MCF 10A (cell line): ENCODE measurements at regions of chrX and their contacts with region 1.

Region 1: GRCh38 chrX:138745196-138745595 is 33.7 kb upstream of the FGF13 start:
- DNase-seq: peak; percentile 66
- H3K4me3 Mint-ChIP-seq: no peak overlapping the region
- H3K27ac Mint-ChIP-seq: no peak overlapping the region
- H3K4me1 Mint-ChIP-seq: no peaks in the 10 kb centered on the region
- H3K27me3 Mint-ChIP-seq: peaks cover 19% of the 10 kb centered on the region
- CTCF ChIP-seq: peak; percentile 80

Region 2: GRCh38 chrX:138128027-138128671 is 617.0 kb before region 1 on chrX:
- CTCF ChIA-PET with region 1: interaction called, 12 read pairs
- POLR2A ChIA-PET with region 1: no interaction called
- intact Hi-C with region 1: loop called (anchors 1 kb)
- DNase-seq: peak; percentile 49
- H3K4me3 Mint-ChIP-seq: no peak overlapping the region
- H3K27ac Mint-ChIP-seq: no peak overlapping the region
- H3K4me1 Mint-ChIP-seq: peaks cover 5% of the 10 kb centered on the region
- H3K27me3 Mint-ChIP-seq: peaks cover 11% of the 10 kb centered on the region
- CTCF ChIP-seq: peak; percentile 54

Region 3: DNA sequence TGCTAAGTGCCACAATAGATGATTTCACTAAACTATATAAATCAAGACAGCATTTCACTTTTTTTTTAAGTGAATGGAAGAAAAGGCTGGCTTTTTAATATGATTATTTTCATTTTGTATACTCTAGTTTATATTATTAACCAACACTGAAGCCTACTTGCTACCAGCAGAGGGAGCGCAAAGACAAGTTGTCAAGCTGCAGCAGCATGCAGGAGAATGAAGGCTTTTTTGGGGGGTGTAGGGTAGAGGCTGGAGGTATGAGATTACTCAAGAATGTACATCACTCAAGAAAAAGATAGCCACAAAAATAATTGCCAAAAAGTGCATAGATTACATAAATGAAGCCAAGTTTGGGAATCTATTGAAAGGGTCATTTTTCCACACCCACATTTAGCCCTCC is 553.2 kb before region 1 on chrX:
- CTCF ChIA-PET with region 1: interaction called, 18 read pairs
- POLR2A ChIA-PET with region 1: interaction called, 3 read pairs
- intact Hi-C with region 1: loop called (anchors 1 kb)
- DNase-seq: peak; percentile 43
- H3K4me3 Mint-ChIP-seq: no peak overlapping the region
- H3K27ac Mint-ChIP-seq: no peak overlapping the region
- H3K4me1 Mint-ChIP-seq: no peaks in the 10 kb centered on the region
- H3K27me3 Mint-ChIP-seq: peaks cover 19% of the 10 kb centered on the region
- CTCF ChIP-seq: peak; percentile 48

Region 4: GRCh38 chrX:138298259-138298658 is 446.9 kb before region 1 on chrX:
- CTCF ChIA-PET with region 1: interaction called, 15 read pairs
- POLR2A ChIA-PET with region 1: no interaction called
- intact Hi-C with region 1: loop called (anchors 2 kb)
- DNase-seq: peak; percentile 1
- H3K4me3 Mint-ChIP-seq: no peak overlapping the region
- H3K27ac Mint-ChIP-seq: no peak overlapping the region
- H3K4me1 Mint-ChIP-seq: no peaks in the 10 kb centered on the region
- H3K27me3 Mint-ChIP-seq: no peaks in the 10 kb centered on the region
- CTCF ChIP-seq: no peak